T-cell (primary cell): ENCODE measurements at regions of chr7 and their contacts with region 1.

Region 1: DNA sequence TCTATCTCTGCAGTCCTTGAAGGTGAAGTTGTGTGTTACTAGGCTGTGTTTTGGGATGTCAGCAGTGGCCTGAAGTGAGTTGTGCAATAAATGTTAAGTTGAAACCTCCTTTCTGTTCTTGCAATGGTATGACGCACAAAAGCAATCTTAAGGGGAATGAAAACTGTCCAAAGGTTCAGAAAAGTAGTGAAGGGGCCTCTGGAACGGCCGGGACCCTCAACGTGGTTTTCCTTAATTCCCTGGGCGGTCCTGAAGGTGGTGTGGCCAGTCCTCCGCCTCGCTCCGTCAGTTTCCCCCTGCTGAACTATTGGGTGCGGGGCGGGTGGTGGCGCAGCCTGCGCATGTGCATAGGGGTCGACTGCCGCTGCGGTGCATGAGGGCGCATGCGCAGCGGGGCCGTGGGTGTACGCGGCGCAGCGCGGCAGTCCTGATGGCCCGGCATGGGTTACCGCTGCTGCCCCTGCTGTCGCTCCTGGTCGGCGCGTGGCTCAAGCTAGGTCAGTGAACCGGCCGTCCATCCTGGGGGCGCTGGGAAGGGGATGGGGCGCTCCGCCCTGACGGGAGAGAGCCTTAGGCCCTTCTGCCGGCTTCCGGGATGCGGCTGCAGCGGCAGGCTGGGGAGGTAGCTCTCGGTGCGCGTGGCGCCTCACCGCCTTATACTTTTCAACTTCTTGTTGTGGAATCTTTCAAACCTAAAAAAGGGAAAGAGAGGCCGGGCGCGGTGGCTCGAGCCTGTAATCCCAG is at the start of gene SUMF2:
- DNase-seq: peak; percentile 75 to 95 (median 87)
- ATAC-seq: peak; percentile 89 to 91 (median 90)
- H3K4me3 ChIP-seq: peak within 1 kb of the TSS; percentile 76 to 98
- H3K4me3 Mint-ChIP-seq: peak within 1 kb of the TSS; percentile 92 to 95 (median 92)
- H3K27ac ChIP-seq: peak within 1 kb of the TSS; percentile 84
- H3K27ac Mint-ChIP-seq: peak within 1 kb of the TSS; percentile 94 to 96
- H3K4me1 ChIP-seq: peaks cover 7 to 21% of the 10 kb centered on the region in 2 experiments
- H3K4me1 Mint-ChIP-seq: peaks cover 28 to 31% (median 29%) of the 10 kb centered on the region in 3 donors
- H3K27me3 ChIP-seq: no peaks in the 10 kb centered on the region
- H3K27me3 Mint-ChIP-seq: no peaks in the 10 kb centered on the region
- total RNA-seq, gene SUMF2: 127 to 182 (median 174) TPM

Region 2: DNA sequence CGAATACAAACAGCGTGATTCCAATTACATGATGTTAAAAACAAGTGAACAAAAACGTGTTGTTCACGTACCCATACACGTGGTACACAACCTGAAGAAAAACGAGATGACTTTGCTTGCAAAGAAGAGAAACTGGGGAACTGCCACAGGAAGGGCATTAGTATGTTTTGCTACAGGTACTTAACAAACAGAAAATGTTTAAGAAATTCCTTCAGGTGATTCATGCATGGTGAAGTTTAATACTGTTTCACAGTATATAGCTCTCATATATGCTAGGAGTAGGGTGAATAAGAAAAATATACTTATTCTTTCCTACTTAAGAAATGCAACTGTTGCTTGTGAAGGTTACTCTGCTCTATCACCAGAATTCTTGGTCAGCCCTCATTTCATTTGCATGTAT is 1314.9 kb before region 1 on chr7:
- CTCF ChIA-PET with region 1: no interaction called
- POLR2A ChIA-PET with region 1: interaction called in 1 of 2 experiments, 10 read pairs
- DNase-seq: no peak
- ATAC-seq: no peak
- H3K4me3 ChIP-seq: no peak overlapping the region
- H3K4me3 Mint-ChIP-seq: no peak overlapping the region
- H3K27ac ChIP-seq: no peak overlapping the region
- H3K27ac Mint-ChIP-seq: no peak overlapping the region
- H3K4me1 ChIP-seq: no peaks in the 10 kb centered on the region
- H3K4me1 Mint-ChIP-seq: peaks cover 10 to 12% (median 11%) of the 10 kb centered on the region in 3 donors
- H3K27me3 ChIP-seq: no peaks in the 10 kb centered on the region
- H3K27me3 Mint-ChIP-seq: no peaks in the 10 kb centered on the region

Region 3: DNA sequence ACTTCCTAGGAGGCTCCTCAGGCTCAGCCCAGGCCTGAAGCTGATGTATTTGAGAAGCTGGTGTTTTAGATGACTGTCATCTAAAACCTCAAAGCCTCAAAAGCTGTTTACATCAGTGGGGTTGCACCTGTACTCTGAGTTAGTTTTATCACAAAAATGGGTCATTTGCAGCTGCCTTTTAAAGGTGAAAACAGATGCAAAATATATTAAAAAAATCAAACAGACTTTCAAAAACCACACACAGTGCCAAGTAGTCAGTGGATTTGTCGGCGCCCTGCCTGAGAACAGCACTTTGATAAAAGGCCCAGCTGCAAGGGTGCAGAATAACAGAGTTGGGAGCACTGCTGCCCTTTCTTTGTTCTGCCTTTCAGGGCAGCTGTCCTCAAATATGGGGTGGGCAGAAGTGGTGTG is 594.8 kb before region 1 on chr7:
- CTCF ChIA-PET with region 1: interaction called in 1 of 2 experiments, 11 read pairs
- POLR2A ChIA-PET with region 1: no interaction called
- DNase-seq: peak in 34 of 35 experiments; percentile 18 to 72 (median 42)
- ATAC-seq: peak; percentile 87 to 90 (median 88)
- H3K4me3 ChIP-seq: no peak overlapping the region
- H3K4me3 Mint-ChIP-seq: peak overlapping the region; percentile 43 to 70 (median 58)
- H3K27ac ChIP-seq: peak overlapping the region; percentile 77
- H3K27ac Mint-ChIP-seq: peak overlapping the region; percentile 89 to 93
- H3K4me1 ChIP-seq: peaks cover 27 to 76% of the 10 kb centered on the region in 2 experiments
- H3K4me1 Mint-ChIP-seq: peaks cover 72 to 84% (median 73%) of the 10 kb centered on the region in 3 donors
- H3K27me3 ChIP-seq: no peaks in the 10 kb centered on the region
- H3K27me3 Mint-ChIP-seq: no peaks in the 10 kb centered on the region

Region 4: GRCh38 chr7:56051339-56052191 is 12.5 kb before region 1 on chr7 and contains the starts of genes CCT6A and PSPH:
- CTCF ChIA-PET with region 1: interaction called, 3 to 13 read pairs
- POLR2A ChIA-PET with region 1: interaction called, 4 read pairs
- DNase-seq: peak; percentile 68 to 94 (median 78)
- ATAC-seq: peak; percentile 93 to 97 (median 96)
- H3K4me3 ChIP-seq: peak within 1 kb of the TSS; percentile 70 to 89
- H3K4me3 Mint-ChIP-seq: peak within 1 kb of the TSS; percentile 87 to 93 (median 92)
- H3K27ac ChIP-seq: peak within 1 kb of the TSS; percentile 40
- H3K27ac Mint-ChIP-seq: peak within 1 kb of the TSS; percentile 86 to 92
- H3K4me1 ChIP-seq: peaks cover 11 to 31% of the 10 kb centered on the region in 2 experiments
- H3K4me1 Mint-ChIP-seq: peaks cover 38 to 43% (median 39%) of the 10 kb centered on the region in 3 donors
- H3K27me3 ChIP-seq: no peaks in the 10 kb centered on the region
- H3K27me3 Mint-ChIP-seq: no peaks in the 10 kb centered on the region
- total RNA-seq, gene CCT6A: 44.6 to 74.7 (median 70.3) TPM
- total RNA-seq, gene PSPH: 1.9 to 8.3 (median 5.7) TPM